Activated CD8-positive, alpha-beta memory T cell treated with anti-CD3 and anti-CD28 coated beads, Interleukin-2, amount 10 ng/mL, durations not matched to agents 7 days and 5 days (primary cell): ENCODE measurements at regions of chr12 and their contacts with region 1.

Region 1: DNA sequence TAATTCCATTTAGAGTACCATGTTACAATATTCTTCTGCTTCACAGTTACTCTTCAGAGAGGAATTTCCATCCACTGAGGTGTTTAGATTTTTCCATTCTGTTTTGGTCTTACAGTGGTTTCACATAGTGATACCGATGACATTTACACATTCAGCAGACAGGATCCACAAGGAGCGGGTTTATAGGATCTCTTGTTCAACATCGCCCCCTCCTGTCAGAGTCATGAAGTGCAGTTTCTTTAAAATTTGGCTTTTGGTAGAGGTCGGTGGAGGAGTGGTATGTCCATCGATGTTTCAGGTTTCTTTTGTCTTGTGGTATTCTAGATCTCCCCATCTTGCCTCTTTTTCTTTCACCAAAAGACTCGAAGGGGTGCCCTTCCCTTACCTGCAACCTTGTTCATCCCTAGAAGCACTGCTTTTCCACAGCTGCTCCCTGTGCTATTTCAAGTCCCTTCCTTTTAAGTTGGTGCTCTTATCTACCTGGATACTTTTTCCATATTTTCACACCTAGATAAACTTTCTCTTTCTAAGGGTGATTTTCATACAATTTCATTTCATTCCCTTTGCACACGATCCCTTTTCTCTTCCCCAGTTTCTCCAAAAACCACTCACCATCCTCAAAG is 181.3 kb downstream of the ITPR2 start:
- DNase-seq: peak; percentile 57
- ATAC-seq: peak; percentile 60
- H3K4me3 Mint-ChIP-seq: no peak overlapping the region
- H3K27ac Mint-ChIP-seq: no peak overlapping the region
- H3K4me1 Mint-ChIP-seq: no peaks in the 10 kb centered on the region
- H3K27me3 Mint-ChIP-seq: no peaks in the 10 kb centered on the region

Region 2: DNA sequence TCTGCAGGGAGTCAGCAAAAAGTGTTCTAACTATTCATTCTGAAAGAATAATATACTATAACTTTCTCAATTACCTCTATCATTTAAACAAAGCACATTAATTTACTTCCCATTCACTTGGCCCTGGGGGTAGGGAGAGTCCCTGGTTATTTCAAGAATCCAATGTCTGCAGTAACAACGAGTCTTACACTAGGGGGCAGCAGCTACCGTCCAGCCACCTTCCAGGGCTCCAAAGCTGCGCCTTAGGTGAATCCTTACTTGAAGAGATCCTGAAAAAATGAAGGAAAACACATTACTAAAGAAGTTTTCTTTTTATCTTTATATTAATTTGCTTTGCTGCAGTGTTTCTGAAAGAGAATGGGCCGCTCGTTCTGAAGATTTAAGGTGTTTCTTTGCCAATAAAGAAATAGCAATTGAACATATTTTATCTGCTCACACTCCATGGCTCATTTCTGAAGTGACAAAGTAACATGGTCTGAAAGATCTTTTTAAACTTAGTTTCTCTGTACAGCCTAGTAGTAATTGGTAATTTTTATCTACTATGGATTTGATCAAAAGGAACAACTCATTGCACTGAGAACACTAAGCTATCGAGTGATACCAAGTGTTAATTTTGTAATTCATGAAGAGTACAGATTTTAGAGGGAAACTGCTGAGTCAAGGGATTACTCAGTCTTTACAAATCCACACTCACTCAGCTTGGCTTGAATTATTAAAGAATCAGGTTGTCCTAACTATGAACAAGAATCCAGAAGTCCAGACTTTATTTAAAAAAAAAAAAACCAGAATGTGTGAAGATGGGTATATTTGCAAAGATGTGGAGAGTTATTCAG is 554.4 kb before region 1 on chr12:
- CTCF ChIA-PET with region 1: interaction called, 13 read pairs
- DNase-seq: peak; percentile 58
- ATAC-seq: peak; percentile 70
- H3K4me3 Mint-ChIP-seq: no peak overlapping the region
- H3K27ac Mint-ChIP-seq: no peak overlapping the region
- H3K4me1 Mint-ChIP-seq: peaks cover 5% of the 10 kb centered on the region
- H3K27me3 Mint-ChIP-seq: peaks cover 37% of the 10 kb centered on the region

Region 3: GRCh38 chr12:26119391-26119981 is 532.2 kb before region 1 on chr12:
- CTCF ChIA-PET with region 1: interaction called, 12 read pairs
- DNase-seq: no peak
- ATAC-seq: no peak
- H3K4me3 Mint-ChIP-seq: no peak overlapping the region
- H3K27ac Mint-ChIP-seq: no peak overlapping the region
- H3K4me1 Mint-ChIP-seq: peaks cover 17% of the 10 kb centered on the region
- H3K27me3 Mint-ChIP-seq: peaks cover 82% of the 10 kb centered on the region

Region 4: GRCh38 chr12:26327975-26328644 is 323.6 kb before region 1 on chr12:
- CTCF ChIA-PET with region 1: no interaction called
- DNase-seq: no peak
- ATAC-seq: no peak
- H3K4me3 Mint-ChIP-seq: no peak overlapping the region
- H3K27ac Mint-ChIP-seq: no peak overlapping the region
- H3K4me1 Mint-ChIP-seq: no peaks in the 10 kb centered on the region
- H3K27me3 Mint-ChIP-seq: peaks cover 33% of the 10 kb centered on the region